Heart right ventricle (tissue), 16 donors: ENCODE measurements at regions of chr16 and their contacts with region 1.

Region 1: DNA sequence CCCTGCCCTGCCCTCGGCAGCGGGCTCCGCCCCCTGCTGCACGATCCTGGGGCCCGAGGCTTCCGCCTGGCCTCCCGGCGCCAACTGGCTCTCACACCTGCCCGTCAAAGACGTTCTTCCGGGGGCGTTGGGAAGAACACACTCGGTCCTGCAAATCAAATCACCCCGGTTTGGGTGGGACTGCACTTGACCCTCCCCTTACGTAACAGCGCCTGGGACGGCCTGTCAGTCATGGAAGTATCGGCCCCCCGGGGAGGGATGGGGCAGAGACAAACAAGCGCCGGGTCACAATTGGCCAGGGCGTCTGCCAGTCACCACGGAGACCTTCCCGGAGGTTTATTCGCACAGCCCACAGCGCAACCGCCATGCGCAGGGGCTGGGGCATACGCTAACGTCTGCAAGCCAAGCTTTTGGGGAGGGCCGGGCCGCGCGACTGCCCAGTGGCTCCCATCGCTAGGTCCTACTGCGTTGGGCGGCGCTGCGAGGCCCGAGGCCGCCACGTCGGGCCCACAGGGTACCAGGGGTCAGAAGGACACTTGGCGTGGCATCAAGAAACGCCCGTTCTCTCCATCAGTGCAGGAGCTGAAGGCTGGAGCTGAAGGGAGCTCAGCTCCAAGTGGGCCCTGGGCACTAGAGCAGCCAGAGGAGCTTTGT is 388 bp upstream of the AKTIP start:
- DNase-seq: peak; percentile 100
- ATAC-seq: peak; percentile 92 to 96 (median 94)
- H3K4me3 ChIP-seq: peak overlapping the region; percentile 83 to 99 (median 88)
- H3K27ac ChIP-seq: peak overlapping the region; percentile 91 to 99 (median 94)
- H3K4me1 ChIP-seq: peaks cover 5 to 47% (median 40%) of the 10 kb centered on the region in 9 donors
- H3K27me3 ChIP-seq: no peaks in the 10 kb centered on the region
- CTCF ChIP-seq: no peak

Region 2: DNA sequence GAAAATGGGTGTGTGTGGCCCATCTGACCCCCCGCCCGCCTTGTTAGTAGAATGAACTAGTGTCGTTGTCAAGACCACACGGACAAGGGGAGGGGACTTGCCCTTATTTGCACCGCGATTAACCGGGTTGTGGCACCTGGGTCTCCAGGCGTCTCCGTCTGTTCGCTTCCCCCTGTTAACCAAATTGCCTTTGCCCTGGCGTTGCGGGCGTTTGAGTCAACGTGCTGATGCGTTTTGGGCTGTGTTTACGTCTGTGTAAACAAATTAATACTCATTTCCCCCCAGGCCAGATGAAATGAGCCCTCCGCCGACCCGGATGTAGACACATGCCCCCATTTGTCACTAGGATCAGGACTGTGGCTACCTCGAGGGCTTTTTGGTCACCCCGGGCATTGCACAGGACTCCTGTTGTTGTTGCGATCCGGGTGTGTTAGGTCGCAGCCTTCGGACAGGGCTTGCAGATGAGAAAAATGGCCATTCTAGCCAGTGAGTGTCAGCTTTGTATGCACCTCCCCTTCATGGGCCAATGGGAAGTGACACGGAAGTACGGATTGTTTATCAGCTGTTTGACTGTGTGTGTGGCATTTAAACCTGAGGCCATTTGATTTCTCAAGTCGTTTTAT is 68.2 kb before region 1 on chr16:
- intact Hi-C with region 1: loop called in 6 of 10 experiments (anchors 2 to 10 kb)
- DNase-seq: peak; percentile 45 to 74
- ATAC-seq: peak; percentile 87 to 96 (median 92)
- H3K4me3 ChIP-seq: peak overlapping the region; percentile 74 to 100 (median 95)
- H3K27ac ChIP-seq: peak overlapping the region; percentile 89 to 97 (median 94)
- H3K4me1 ChIP-seq: peaks cover 0 to 24% (median 15%) of the 10 kb centered on the region in 9 donors
- H3K27me3 ChIP-seq: no peaks in the 10 kb centered on the region
- CTCF ChIP-seq: no peak

Region 3: GRCh38 chr16:53465606-53466280 is 37.7 kb before region 1 on chr16:
- intact Hi-C with region 1: no loop called
- DNase-seq: no peak
- ATAC-seq: no peak
- H3K4me3 ChIP-seq: no peak overlapping the region
- H3K27ac ChIP-seq: no peak overlapping the region
- H3K4me1 ChIP-seq: peaks cover 0 to 9% (median 0%) of the 10 kb centered on the region in 9 donors
- H3K27me3 ChIP-seq: no peaks in the 10 kb centered on the region
- CTCF ChIP-seq: no peak